ENCODE measurements at regions of chr1 and their contacts with region 1.

Region 1: GRCh38 chr1:10651389-10651766 is 145.1 kb downstream of the CASZ1 start:
- DNase-seq: no peak
- H3K4me3 ChIP-seq: no peak overlapping the region
- H3K27ac ChIP-seq: no peak overlapping the region
- H3K4me1 ChIP-seq: no peaks in the 10 kb centered on the region
- H3K27me3 ChIP-seq: no peaks in the 10 kb centered on the region
- CTCF ChIP-seq: no peak

Region 2: DNA sequence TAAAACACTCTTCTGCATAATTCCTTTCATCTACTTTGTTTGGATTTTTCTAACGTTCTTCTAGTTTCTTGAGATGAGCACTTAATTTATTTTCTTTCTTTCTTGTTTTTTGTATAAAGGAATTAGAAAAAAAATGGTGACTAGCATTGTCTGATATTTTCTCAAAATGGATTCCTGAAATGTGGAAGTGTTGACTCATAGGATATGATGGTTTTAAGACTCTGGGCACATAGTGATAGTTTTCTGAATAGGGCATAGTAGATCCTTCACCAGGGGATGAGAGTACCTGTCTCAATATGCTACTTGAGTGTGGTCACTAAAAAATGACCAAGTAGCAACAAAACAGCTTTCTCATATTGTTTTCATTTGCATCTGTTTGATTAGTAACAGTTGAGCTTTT is 75.8 kb before region 1 on chr1:
- CTCF ChIA-PET with region 1: no interaction called
- dilution Hi-C with region 1: loop called (anchors 5 kb)
- in situ Hi-C with region 1: no loop called
- intact Hi-C with region 1: no loop called
- DNase-seq: peak; percentile 40
- H3K4me3 ChIP-seq: no peak overlapping the region
- H3K27ac ChIP-seq: peak overlapping the region; percentile 44
- H3K4me1 ChIP-seq: peaks cover 5% of the 10 kb centered on the region
- H3K27me3 ChIP-seq: no peaks in the 10 kb centered on the region
- CTCF ChIP-seq: no peak

Region 3: DNA sequence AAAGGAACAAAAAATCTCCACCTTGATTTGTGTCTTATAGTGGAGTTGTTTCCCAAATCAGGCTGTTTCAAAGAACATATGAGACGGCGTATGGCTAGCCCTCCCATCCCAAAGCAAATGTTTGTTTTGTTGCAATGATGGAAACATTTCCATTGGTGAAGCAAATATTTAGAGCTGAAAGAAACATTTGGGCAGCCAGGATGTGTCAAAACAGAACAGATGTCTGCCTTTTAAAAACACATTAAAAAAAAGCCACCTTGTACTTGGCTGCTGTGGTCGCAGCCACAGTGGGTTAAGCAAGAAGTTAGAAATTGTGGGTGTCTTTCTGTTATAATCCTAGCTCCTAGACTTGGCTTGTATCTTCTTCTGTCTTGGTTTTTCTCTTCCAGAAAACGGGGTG is 60.4 kb before region 1 on chr1:
- CTCF ChIA-PET with region 1: no interaction called
- dilution Hi-C with region 1: no loop called
- in situ Hi-C with region 1: no loop called
- intact Hi-C with region 1: no loop called
- DNase-seq: no peak
- H3K4me3 ChIP-seq: no peak overlapping the region
- H3K27ac ChIP-seq: no peak overlapping the region
- H3K4me1 ChIP-seq: no peaks in the 10 kb centered on the region
- H3K27me3 ChIP-seq: no peaks in the 10 kb centered on the region
- CTCF ChIP-seq: no peak

Region 4: GRCh38 chr1:10714337-10715114 is 63.1 kb after region 1 on chr1:
- CTCF ChIA-PET with region 1: no interaction called
- dilution Hi-C with region 1: loop called (anchors 5 kb)
- in situ Hi-C with region 1: no loop called
- intact Hi-C with region 1: no loop called
- DNase-seq: no peak
- H3K4me3 ChIP-seq: no peak overlapping the region
- H3K27ac ChIP-seq: no peak overlapping the region
- H3K4me1 ChIP-seq: no peaks in the 10 kb centered on the region
- H3K27me3 ChIP-seq: no peaks in the 10 kb centered on the region
- CTCF ChIP-seq: no peak

Region 5: GRCh38 chr1:10745886-10746455 is 94.6 kb after region 1 on chr1:
- CTCF ChIA-PET with region 1: no interaction called
- dilution Hi-C with region 1: loop called (anchors 5 kb)
- in situ Hi-C with region 1: no loop called
- intact Hi-C with region 1: no loop called
- DNase-seq: no peak
- H3K4me3 ChIP-seq: no peak overlapping the region
- H3K27ac ChIP-seq: no peak overlapping the region
- H3K4me1 ChIP-seq: no peaks in the 10 kb centered on the region
- H3K27me3 ChIP-seq: no peaks in the 10 kb centered on the region
- CTCF ChIP-seq: no peak